ENCODE measurements at regions of chr11 and their contacts with region 1.

Region 1: DNA sequence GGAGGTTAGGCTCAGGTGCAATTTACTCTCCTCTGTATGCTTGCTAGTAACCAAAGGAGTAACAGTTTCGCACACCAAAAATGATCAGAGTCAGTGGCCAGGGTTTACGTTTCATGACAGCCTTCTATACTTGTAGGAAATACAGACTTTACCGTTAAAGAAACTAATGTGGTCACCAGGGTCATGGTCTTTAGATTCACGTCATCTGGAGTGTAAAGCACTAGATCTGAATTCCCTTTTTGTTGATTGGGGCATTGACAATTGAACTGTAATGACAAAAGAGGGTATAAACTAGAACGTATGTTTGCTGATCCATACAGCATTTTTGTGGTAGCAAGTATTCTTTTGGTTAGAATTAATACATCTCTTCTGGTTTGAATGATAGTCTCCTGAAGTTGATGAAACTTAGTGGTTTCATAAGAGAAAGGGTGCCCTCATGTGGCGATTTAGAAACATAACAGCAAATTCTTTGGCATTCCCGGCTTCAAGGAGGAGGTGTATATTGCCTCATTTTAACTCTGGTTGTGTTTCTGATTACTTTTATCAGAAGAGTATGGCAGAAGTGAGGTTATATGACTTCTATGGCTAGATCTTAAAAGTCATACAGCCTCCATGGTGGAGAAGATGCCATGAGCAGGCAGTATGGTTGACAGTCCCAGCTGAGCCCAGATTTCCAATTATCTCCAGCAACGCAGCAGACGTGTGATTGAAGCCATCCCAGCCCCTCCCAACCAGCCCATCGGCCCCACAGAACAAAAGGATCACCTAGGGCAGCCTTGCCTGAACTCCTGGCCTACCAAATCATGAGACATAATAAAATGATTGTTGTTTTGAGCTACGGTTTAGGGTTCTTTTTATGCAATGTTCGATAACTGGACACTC is 35.1 kb downstream of the MMP7 start:
- DNase-seq: peak; percentile 14 to 84
- H3K4me3 ChIP-seq: no peak overlapping the region
- H3K27ac ChIP-seq: no peak overlapping the region
- H3K4me1 ChIP-seq: peaks cover 18% of the 10 kb centered on the region
- H3K27me3 ChIP-seq: no peaks in the 10 kb centered on the region
- CTCF ChIP-seq: peak; percentile 91

Region 2: DNA sequence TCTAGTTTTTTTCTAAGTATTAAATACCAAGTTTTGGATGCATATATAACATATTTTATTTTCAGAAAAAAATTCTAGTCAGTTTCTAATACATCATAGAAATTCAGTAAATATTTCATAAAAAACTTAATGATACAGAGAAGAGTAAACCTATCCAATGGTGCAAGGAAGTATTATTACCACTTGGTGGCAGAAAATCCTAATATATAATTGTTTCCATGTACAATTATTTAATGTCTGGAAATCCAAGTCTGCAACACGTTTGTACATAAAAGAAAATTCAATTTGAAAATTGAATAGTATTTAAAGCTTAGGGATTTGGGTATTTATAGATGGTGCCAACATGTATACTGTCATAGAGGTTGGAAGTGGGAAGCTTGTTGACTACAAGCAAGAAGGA is 1038.6 kb before region 1 on chr11:
- CTCF ChIA-PET with region 1: no interaction called
- POLR2A ChIA-PET with region 1: no interaction called
- intact Hi-C with region 1: loop called (anchors 10 kb)
- DNase-seq: no peak
- H3K4me3 ChIP-seq: no peak overlapping the region
- H3K27ac ChIP-seq: no peak overlapping the region
- H3K4me1 ChIP-seq: no peaks in the 10 kb centered on the region
- H3K27me3 ChIP-seq: no peaks in the 10 kb centered on the region
- CTCF ChIP-seq: peak; percentile 77

Region 3: GRCh38 chr11:101860696-101861427 is 634.5 kb before region 1 on chr11:
- CTCF ChIA-PET with region 1: no interaction called
- POLR2A ChIA-PET with region 1: no interaction called
- intact Hi-C with region 1: loop called (anchors 2 kb)
- DNase-seq: peak; percentile 30 to 68
- H3K4me3 ChIP-seq: no peak overlapping the region
- H3K27ac ChIP-seq: no peak overlapping the region
- H3K4me1 ChIP-seq: peaks cover 20% of the 10 kb centered on the region
- H3K27me3 ChIP-seq: no peaks in the 10 kb centered on the region
- CTCF ChIP-seq: peak; percentile 89

Region 4: DNA sequence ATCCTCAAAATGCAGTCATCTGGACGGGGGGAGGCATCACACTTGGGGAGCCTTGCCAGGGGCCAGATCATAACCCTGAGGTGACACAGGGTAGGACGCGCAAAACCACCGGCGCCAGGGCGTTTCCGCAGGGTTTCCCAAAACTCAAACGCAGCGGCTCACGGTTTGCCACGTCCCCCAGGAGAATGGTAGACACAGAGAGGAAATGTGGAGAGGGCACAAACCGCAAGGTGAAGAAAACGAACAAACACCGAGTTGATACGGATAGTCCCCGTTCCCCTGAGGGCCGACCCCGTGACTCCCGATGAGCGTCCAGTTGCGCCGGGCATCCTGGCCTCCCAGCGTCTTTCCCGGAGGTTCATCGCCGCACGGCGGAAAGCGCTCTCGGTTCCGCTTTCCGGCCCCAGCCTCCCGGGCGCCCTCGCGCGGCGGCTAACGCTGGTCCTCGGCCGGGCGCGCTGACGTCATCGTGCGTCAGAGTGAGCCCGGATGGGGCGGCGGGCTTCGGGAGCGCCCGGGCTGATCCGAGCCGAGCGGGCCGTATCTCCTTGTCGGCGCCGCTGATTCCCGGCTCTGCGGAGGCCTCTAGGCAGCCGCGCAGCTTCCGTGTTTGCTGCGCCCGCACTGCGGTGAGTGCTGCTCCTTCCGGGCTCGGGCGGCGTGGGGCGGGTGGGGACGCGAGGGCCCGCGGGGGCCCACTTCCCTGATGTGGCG is 148.5 kb before region 1 on chr11 and contains the start of gene BIRC2:
- CTCF ChIA-PET with region 1: interaction called, 3 read pairs
- POLR2A ChIA-PET with region 1: no interaction called
- intact Hi-C with region 1: loop called (anchors 5 kb)
- DNase-seq: peak; percentile 85 to 96
- H3K4me3 ChIP-seq: peak within 1 kb of the TSS; percentile 69
- H3K27ac ChIP-seq: peak within 1 kb of the TSS; percentile 87
- H3K4me1 ChIP-seq: peaks cover 29% of the 10 kb centered on the region
- H3K27me3 ChIP-seq: no peaks in the 10 kb centered on the region
- CTCF ChIP-seq: peak; percentile 74
- total RNA-seq, gene BIRC2: 33.7 and 37.5 TPM in 2 replicates

Region 5: GRCh38 chr11:102390667-102391465 is 104.5 kb before region 1 on chr11:
- CTCF ChIA-PET with region 1: no interaction called
- POLR2A ChIA-PET with region 1: no interaction called
- intact Hi-C with region 1: loop called (anchors 1 kb)
- DNase-seq: peak; percentile 45 to 55
- H3K4me3 ChIP-seq: no peak overlapping the region
- H3K27ac ChIP-seq: no peak overlapping the region
- H3K4me1 ChIP-seq: no peaks in the 10 kb centered on the region
- H3K27me3 ChIP-seq: no peaks in the 10 kb centered on the region
- CTCF ChIP-seq: peak; percentile 96

Region 6: GRCh38 chr11:102553835-102554282 is 58.5 kb after region 1 on chr11:
- CTCF ChIA-PET with region 1: no interaction called
- POLR2A ChIA-PET with region 1: no interaction called
- intact Hi-C with region 1: loop called (anchors 5 kb)
- DNase-seq: peak in 1 of 2 experiments; percentile 83
- H3K4me3 ChIP-seq: no peak overlapping the region; the same call in 1 of the 2 replicates
- H3K27ac ChIP-seq: peak overlapping the region; percentile 95
- H3K4me1 ChIP-seq: peaks cover 53% of the 10 kb centered on the region
- H3K27me3 ChIP-seq: no peaks in the 10 kb centered on the region
- CTCF ChIP-seq: no peak

Measured in PC-9 (cell line).